ENCODE measurements at regions of chr1 and their contacts with region 1.

Region 1: GRCh38 chr1:34852677-34853217 is 6.8 kb downstream of the SMIM12 start:
- DNase-seq: peak; percentile 89
- ATAC-seq: peak; percentile 100
- H3K4me3 ChIP-seq: no peak overlapping the region
- H3K4me3 Mint-ChIP-seq: no peak overlapping the region
- H3K27ac ChIP-seq: no peak overlapping the region
- H3K27ac Mint-ChIP-seq: peak overlapping the region; percentile 41
- H3K4me1 ChIP-seq: peaks cover under 1 to 6% of the 10 kb centered on the region in 2 donors
- H3K4me1 Mint-ChIP-seq: peaks cover 16% of the 10 kb centered on the region
- H3K27me3 ChIP-seq: no peaks in the 10 kb centered on the region
- H3K27me3 Mint-ChIP-seq: no peaks in the 10 kb centered on the region
- CTCF ChIP-seq: peak; percentile 92

Region 2: DNA sequence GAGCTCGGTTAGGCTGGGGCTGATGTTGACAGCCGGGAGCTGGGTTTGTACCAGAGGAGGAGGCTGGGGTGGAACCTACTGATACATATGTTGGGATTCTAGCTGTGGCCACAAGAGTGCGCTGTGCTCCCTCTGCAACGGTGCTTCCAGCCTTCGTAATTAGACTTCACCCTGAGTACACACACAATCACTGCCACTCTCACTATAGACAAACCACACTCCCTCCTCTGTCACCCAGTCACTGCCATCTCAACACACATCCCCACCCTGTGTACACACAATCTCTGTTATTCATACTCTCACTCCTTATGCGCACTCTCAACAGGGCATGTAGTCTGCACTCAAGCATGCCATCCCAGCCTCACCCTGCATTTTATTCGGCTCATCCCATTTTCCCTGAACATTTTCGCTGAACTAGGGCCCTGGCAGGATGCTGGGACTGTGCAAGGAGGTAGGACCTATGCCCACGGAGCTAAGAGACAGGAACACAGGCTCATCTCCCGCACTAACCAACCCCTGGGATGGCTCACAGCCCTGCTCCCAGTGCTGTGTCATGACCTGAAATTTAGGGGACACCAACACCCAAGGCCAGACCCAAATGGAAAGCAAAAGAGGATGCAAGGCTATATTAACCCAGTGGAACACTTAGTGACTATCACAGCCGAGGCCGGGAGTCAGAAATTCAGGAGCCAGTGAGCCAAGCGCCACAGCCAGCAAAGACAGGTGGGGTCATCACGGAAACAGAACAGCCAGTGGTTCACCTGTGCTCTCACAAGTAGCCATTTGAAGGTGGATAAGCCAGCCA is 66.0 kb before region 1 on chr1:
- CTCF ChIA-PET with region 1: no interaction called
- POLR2A ChIA-PET with region 1: no interaction called
- intact Hi-C with region 1: loop called (anchors 1 kb)
- DNase-seq: peak; percentile 70
- ATAC-seq: peak; percentile 62
- H3K4me3 ChIP-seq: no peak overlapping the region
- H3K4me3 Mint-ChIP-seq: no peak overlapping the region
- H3K27ac ChIP-seq: no peak overlapping the region
- H3K27ac Mint-ChIP-seq: no peak overlapping the region
- H3K4me1 ChIP-seq: peaks cover under 1 to 4% of the 10 kb centered on the region in 2 donors
- H3K4me1 Mint-ChIP-seq: peaks cover 15% of the 10 kb centered on the region
- H3K27me3 ChIP-seq: peaks cover 0 to 32% (median 8%) of the 10 kb centered on the region in 4 experiments
- H3K27me3 Mint-ChIP-seq: peaks cover 42% of the 10 kb centered on the region
- CTCF ChIP-seq: peak; percentile 82

Region 3: DNA sequence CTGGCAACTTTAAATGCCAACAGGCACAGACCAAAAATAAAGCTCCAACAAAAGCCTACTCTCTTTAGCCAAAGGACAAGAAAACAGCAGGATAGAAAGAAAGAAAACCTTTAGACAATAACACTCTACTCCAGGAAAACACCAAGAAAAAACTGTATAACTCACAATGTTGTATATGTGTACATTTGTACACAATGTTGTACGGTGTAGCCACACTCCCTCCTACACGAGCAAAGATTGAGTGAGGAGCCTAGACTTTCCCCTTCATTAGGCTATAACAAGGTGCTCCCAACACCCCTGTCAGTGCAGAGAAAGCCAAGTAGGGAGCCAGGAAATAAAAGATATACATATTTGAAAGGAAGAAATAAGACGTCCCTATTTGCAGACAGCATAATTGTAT is 36.0 kb before region 1 on chr1:
- CTCF ChIA-PET with region 1: no interaction called
- POLR2A ChIA-PET with region 1: no interaction called
- intact Hi-C with region 1: no loop called
- DNase-seq: no peak
- ATAC-seq: no peak
- H3K4me3 ChIP-seq: no peak overlapping the region
- H3K4me3 Mint-ChIP-seq: no peak overlapping the region
- H3K27ac ChIP-seq: no peak overlapping the region
- H3K27ac Mint-ChIP-seq: no peak overlapping the region
- H3K4me1 ChIP-seq: no peaks in the 10 kb centered on the region
- H3K4me1 Mint-ChIP-seq: peaks cover 6% of the 10 kb centered on the region
- H3K27me3 ChIP-seq: no peaks in the 10 kb centered on the region
- H3K27me3 Mint-ChIP-seq: peaks cover 3% of the 10 kb centered on the region
- CTCF ChIP-seq: no peak

Region 4: GRCh38 chr1:35745124-35745730 is 892.5 kb after region 1 on chr1:
- CTCF ChIA-PET with region 1: no interaction called
- POLR2A ChIA-PET with region 1: no interaction called
- intact Hi-C with region 1: no loop called
- DNase-seq: no peak
- ATAC-seq: no peak
- H3K4me3 ChIP-seq: no peak overlapping the region
- H3K4me3 Mint-ChIP-seq: no peak overlapping the region
- H3K27ac ChIP-seq: no peak overlapping the region
- H3K27ac Mint-ChIP-seq: no peak overlapping the region
- H3K4me1 ChIP-seq: no peaks in the 10 kb centered on the region
- H3K4me1 Mint-ChIP-seq: no peaks in the 10 kb centered on the region
- H3K27me3 ChIP-seq: no peaks in the 10 kb centered on the region
- H3K27me3 Mint-ChIP-seq: no peaks in the 10 kb centered on the region
- CTCF ChIP-seq: no peak

Measured in B cell (primary cell).